Activated CD4-positive, alpha-beta T cell treated with anti-CD3 and anti-CD28 coated beads for 36 hours (primary cell): ENCODE measurements at regions of chr17 and their contacts with region 1.

Region 1: DNA sequence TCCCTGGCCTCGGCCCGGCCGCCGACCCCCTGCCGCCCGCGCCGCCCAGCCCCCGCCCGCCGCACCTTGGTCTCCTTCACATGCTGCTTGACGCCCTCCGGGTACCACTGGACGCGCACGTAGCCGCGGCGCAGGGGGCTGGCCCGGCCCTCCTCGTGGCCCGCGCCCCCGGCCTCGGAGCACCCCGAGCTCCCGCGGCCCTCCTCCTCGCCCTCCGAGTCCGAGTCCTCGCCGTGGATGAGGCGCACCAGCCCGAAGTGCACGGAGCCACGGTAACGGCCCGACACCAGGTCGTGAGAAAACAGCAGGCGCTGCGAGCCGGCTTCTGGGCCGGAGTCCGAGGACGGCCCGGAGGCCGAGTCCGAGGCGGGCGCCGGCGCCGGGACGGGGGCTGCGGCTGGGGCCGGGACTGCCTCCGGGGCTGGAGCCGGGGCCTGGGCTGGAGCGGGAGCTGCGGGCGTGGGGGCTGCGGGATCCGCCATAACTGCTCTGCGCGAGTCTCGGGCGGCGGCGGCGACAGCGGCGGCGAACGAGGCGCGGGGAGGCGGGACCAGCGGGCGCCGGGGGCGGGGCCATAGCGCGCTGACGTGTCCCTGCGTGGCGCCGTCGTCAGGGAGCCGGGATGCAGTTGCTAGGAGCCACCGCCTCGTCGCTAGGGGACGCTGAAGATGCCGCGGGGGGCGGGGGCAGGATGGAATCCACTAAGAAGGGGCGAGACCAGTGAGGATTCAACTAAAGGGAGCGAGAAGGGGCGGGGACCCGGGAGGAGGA is at the start of gene UBE2O:
- DNase-seq: peak; percentile 96
- ATAC-seq: peak; percentile 96
- H3K4me3 Mint-ChIP-seq: peak within 1 kb of the TSS; percentile 84
- H3K27ac Mint-ChIP-seq: peak within 1 kb of the TSS; percentile 55
- H3K4me1 Mint-ChIP-seq: peaks cover 36% of the 10 kb centered on the region
- H3K27me3 Mint-ChIP-seq: no peaks in the 10 kb centered on the region
- total RNA-seq, gene UBE2O: 28.1 to 30.7 TPM

Region 2: DNA sequence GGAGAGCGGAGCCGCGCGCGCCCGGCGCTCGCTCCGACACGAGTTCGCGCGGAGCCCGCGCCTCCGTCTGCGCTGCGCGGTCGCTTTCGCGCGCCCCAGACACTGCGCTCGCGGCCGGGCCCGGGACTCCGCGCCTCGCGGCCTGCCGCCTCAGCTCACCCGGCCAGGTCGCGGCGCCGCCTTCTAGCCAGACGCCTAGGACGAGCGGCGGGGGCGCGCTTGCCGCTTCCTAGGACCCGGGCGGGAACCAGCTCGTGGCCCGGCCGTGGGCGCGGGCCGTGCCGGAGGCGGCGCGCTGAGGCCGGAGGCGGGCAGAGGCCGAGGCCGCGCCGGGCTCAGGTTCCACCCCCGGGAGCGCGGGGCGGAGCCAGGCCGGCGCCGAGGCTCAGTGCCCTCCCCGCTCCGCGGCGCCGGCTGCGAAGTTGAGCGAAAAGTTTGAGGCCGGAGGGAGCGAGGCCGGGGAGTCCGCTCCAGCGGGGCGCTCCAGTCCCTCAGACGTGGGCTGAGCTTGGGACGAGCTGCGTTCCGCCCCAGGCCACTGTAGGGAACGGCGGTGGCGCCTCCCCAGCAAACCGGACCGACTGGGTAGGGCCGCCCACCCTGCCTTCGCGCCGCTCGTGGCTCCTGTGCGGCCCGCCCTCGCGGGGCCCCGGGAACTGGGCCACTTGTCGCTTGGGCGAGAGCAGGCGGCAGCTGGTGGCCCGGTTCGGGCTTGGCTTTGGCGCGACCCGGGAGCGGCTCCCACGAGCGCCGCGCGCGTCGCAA is 68.4 kb before region 1 on chr17 and contains the start of gene SPHK1:
- CTCF ChIA-PET with region 1: interaction called, 8 read pairs
- POLR2A ChIA-PET with region 1: interaction called, 6 read pairs
- intact Hi-C with region 1: loop called in 1 of 2 experiments (anchors 2 kb)
- DNase-seq: peak; percentile 86
- ATAC-seq: peak; percentile 72
- H3K4me3 Mint-ChIP-seq: peak within 1 kb of the TSS; percentile 85
- H3K27ac Mint-ChIP-seq: peak within 1 kb of the TSS; percentile 81
- H3K4me1 Mint-ChIP-seq: peaks cover 12% of the 10 kb centered on the region
- H3K27me3 Mint-ChIP-seq: no peaks in the 10 kb centered on the region
- total RNA-seq, gene SPHK1: 7.4 to 11.7 TPM

Region 3: DNA sequence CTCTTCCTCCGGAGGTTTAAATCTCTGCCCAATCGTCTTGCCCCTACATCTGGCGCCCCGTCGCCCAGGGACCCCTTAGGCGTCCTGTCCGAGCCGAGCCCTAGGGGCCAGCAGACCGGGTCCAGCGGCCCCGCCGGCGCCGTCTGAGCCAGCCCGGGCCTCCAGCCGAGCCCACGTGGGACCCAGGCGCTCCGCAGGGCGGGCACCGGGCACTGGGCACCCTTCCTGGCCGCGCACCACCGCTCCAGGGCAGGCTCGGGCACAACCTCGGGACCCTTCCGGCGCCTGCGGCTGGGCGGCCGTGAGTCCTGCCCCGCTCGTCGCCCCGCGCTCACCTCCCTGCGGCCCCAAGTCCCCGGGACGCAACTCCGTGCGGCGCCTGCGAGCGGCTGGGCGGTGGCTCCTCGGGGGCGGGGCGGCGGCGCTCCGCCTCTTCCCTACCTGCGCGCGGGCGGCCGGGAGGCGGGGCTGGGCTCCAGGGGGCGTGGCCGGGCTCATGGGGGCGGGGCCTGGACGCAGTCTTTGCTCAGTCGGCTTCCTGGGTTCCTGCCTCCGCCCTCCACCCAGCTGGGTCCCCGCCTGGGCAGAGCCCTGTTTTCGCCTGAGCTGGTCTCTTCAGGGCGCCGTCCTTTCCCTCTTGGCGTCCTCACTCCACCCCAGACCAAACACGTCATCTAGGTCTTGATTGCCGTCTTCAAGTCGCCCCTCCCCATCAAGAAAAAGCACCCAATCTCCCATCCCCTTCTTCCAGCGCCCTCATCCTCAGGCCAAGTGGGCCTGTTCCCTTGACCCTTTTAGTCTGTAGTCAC is 48.4 kb after region 1 on chr17 and contains the start of gene RHBDF2:
- CTCF ChIA-PET with region 1: interaction called, 9 read pairs
- POLR2A ChIA-PET with region 1: no interaction called
- intact Hi-C with region 1: loop called in 1 of 2 experiments (anchors 1 kb)
- DNase-seq: peak; percentile 98
- ATAC-seq: peak; percentile 91
- H3K4me3 Mint-ChIP-seq: peak within 1 kb of the TSS; percentile 87
- H3K27ac Mint-ChIP-seq: peak within 1 kb of the TSS; percentile 94
- H3K4me1 Mint-ChIP-seq: peaks cover 29% of the 10 kb centered on the region
- H3K27me3 Mint-ChIP-seq: no peaks in the 10 kb centered on the region
- total RNA-seq, gene RHBDF2: 23.9 to 28.4 TPM

Region 4: DNA sequence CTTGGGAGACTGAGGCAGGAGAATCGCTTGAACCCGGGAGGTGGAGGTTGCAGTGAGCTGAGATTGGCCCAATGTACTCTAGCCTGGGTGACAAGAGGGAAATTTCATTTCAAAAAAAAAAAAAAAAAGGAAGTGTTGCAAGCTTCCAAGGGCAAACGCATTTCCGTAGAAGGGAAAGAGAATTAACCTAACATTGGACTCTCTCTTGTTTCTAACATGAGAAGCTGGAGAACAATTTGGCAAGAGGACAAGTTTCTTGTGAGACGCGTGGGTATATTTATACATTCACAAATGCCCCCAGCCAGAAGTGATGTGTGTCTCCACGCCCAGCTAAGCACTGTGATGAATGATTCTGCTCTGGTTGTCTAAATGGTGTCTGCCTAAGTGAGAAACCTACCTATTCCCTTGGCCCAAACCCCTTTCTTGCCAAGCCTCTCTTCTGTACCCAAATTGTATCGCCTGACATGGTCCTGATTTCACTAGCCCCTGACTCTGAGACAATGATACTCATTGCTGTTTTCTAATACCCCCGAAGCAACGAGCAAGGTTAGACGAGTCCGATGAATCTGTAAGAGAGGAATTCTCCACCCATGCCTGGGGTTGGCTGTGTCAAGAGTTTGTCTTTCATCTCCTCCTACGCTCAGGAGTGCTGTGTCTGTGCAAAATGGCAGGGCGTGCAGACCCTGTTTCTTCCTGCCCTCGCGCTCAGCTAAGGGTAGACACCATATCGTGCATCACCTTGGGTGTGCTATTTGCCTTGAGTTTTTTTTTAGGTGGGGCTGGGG is 147.0 kb after region 1 on chr17:
- CTCF ChIA-PET with region 1: no interaction called
- POLR2A ChIA-PET with region 1: no interaction called
- intact Hi-C with region 1: no loop called
- DNase-seq: no peak
- ATAC-seq: no peak
- H3K4me3 Mint-ChIP-seq: no peak overlapping the region
- H3K27ac Mint-ChIP-seq: no peak overlapping the region
- H3K4me1 Mint-ChIP-seq: peaks cover 15% of the 10 kb centered on the region
- H3K27me3 Mint-ChIP-seq: peaks cover 7% of the 10 kb centered on the region

Region 5: GRCh38 chr17:76671123-76671911 is 218.5 kb after region 1 on chr17:
- CTCF ChIA-PET with region 1: interaction called, 3 read pairs
- POLR2A ChIA-PET with region 1: no interaction called
- intact Hi-C with region 1: loop called in 1 of 2 experiments (anchors 1 kb)
- DNase-seq: peak; percentile 100
- ATAC-seq: peak; percentile 100
- H3K4me3 Mint-ChIP-seq: peak overlapping the region; percentile 87
- H3K27ac Mint-ChIP-seq: peak overlapping the region; percentile 95
- H3K4me1 Mint-ChIP-seq: peaks cover 25% of the 10 kb centered on the region
- H3K27me3 Mint-ChIP-seq: no peaks in the 10 kb centered on the region

Region 6: DNA sequence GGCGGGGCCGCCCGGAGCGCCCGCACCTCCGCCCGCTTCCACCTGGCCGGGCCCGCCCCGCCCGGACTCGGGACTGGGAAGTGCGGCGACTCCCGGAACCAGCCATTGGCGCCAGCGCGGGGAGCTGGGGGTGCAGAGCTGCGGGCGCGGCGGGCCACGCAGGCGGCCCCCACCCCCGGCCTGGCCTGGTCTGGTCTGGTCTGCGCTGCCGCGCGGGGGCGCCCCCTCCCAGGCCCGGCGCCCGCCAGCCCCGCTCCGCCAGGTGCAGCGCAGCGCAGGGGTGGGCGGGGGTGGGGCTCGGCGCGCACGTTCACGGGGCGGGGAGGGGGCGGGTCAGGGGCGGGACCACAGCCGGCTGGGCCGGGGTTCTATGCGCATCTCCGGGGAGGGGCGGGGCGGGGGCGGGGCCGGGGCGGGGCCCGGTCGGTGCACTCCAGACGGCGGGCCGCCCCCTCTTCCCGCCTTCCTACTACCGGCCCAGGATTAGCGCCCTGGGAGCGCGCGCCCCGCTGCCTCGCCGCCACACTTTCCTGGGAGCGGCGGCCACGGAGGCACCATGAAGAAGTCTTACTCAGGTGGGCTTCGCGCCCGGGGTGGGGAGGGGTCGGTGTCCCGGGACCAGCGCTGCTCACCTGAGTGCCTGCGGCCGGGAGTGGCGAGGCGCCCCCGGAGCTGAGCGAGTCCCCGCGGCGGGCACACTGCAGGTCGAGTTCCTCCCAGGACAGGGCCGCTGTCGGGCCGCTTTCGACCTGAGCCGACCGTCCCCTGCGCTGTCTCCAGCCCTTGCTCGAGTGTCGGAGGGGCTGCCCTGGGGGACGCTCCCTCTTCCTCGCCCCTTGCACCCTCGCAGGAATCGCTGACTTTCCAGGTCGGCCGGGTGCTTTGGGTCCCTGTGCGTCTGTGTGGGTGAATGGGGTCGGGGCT is 828.4 kb after region 1 on chr17:
- CTCF ChIA-PET with region 1: no interaction called
- POLR2A ChIA-PET with region 1: no interaction called
- intact Hi-C with region 1: loop called in 1 of 2 experiments (anchors 10 kb)
- DNase-seq: peak; percentile 79
- ATAC-seq: peak; percentile 90
- H3K4me3 Mint-ChIP-seq: peak overlapping the region; percentile 68
- H3K27ac Mint-ChIP-seq: peak overlapping the region; percentile 51
- H3K4me1 Mint-ChIP-seq: peaks cover 20% of the 10 kb centered on the region
- H3K27me3 Mint-ChIP-seq: peaks cover 14% of the 10 kb centered on the region